Caco-2 (cell line): ENCODE measurements at regions of chr10 and their contacts with region 1.

Region 1: GRCh38 chr10:33243703-33244102 is 90.8 kb downstream of the NRP1 start:
- DNase-seq: no peak
- H3K4me3 ChIP-seq: no peak overlapping the region
- H3K4me3 Mint-ChIP-seq: no peak overlapping the region
- H3K27ac Mint-ChIP-seq: no peak overlapping the region
- H3K4me1 ChIP-seq: peaks cover 61% of the 10 kb centered on the region
- H3K4me1 Mint-ChIP-seq: peaks cover 20% of the 10 kb centered on the region
- H3K27me3 ChIP-seq: no peaks in the 10 kb centered on the region
- H3K27me3 Mint-ChIP-seq: no peaks in the 10 kb centered on the region
- CTCF ChIP-seq: no peak

Region 2: GRCh38 chr10:33258967-33259366 is 15.3 kb after region 1 on chr10:
- CTCF ChIA-PET with region 1: no interaction called
- POLR2A ChIA-PET with region 1: interaction called, 3 read pairs
- intact Hi-C with region 1: loop called (anchors 2 kb)
- DNase-seq: no peak
- H3K4me3 ChIP-seq: no peak overlapping the region
- H3K4me3 Mint-ChIP-seq: no peak overlapping the region
- H3K27ac Mint-ChIP-seq: peak overlapping the region; percentile 55
- H3K4me1 ChIP-seq: peaks cover 42% of the 10 kb centered on the region
- H3K4me1 Mint-ChIP-seq: peaks cover 38% of the 10 kb centered on the region
- H3K27me3 ChIP-seq: no peaks in the 10 kb centered on the region
- H3K27me3 Mint-ChIP-seq: no peaks in the 10 kb centered on the region
- CTCF ChIP-seq: no peak

Region 3: GRCh38 chr10:33291053-33291592 is 47.4 kb after region 1 on chr10:
- CTCF ChIA-PET with region 1: no interaction called
- POLR2A ChIA-PET with region 1: no interaction called
- intact Hi-C with region 1: no loop called
- DNase-seq: no peak
- H3K4me3 ChIP-seq: no peak overlapping the region
- H3K4me3 Mint-ChIP-seq: no peak overlapping the region
- H3K27ac Mint-ChIP-seq: peak overlapping the region; percentile 6
- H3K4me1 ChIP-seq: peaks cover 48% of the 10 kb centered on the region
- H3K4me1 Mint-ChIP-seq: peaks cover 35% of the 10 kb centered on the region
- H3K27me3 ChIP-seq: no peaks in the 10 kb centered on the region
- H3K27me3 Mint-ChIP-seq: no peaks in the 10 kb centered on the region
- CTCF ChIP-seq: no peak